SK-N-SH (cell line): ENCODE measurements at regions of chr19 and their contacts with region 1.

Region 1: GRCh38 chr19:4638828-4639530 is at the start of gene TNFAIP8L1:
- DNase-seq: peak; percentile 100
- H3K4me3 ChIP-seq: peak within 1 kb of the TSS; percentile 72 to 89
- H3K27ac ChIP-seq: peak within 1 kb of the TSS; percentile 54 to 62; a peak in 3 of 4 replicates
- H3K4me1 ChIP-seq: peaks cover 3 to 20% of the 10 kb centered on the region in 2 experiments; a peak in 1 of 4 replicates
- H3K27me3 ChIP-seq: no peaks in the 10 kb centered on the region
- CTCF ChIP-seq: no peak
- EP300 ChIP-seq: no peak
- RAD21 ChIP-seq: no peak
- polyA plus RNA-seq, gene TNFAIP8L1: 5.7 and 6.4 TPM in 2 replicates

Region 2: DNA sequence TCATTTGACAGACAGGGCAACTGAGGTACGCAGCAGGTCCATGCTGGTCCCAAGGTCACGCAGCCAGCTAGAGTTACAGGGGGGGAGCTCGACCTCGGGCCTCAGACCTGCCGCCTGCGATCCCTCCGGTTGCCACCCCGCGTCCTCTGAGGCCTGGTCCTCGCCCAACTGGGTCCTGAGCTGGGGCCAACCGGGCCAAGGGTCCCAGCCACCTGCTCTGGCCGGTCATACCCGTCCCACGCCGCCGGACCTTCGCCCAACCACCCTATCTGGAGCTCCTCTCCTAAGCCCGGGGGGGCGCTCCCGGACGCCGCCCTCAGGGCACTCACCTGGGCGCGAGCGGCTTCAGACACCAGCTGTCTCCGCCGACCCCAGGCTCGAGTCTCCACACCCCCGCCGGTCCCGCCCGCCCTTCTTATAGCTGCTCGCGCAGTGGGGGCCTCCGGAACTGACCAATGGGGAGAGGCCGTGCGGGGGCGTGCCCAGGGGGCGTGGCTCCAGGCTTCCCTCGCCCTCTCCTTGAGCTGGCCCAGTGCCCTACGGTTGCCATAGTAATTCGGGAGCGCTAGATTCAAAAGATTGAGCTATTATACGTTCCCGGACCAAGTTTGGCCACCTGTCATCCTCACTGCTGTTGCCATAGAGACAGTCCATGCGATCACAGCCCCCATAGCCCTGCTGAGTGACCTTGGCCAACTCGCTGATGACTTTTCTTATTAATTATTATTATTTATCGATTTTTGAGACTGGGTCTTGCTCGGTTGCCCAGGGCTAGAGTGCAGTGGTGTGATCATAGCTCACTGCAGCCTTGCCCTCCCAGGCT is 103.9 kb before region 1 on chr19 and contains the start of gene PLIN5:
- CTCF ChIA-PET with region 1: interaction called, 10 read pairs
- POLR2A ChIA-PET with region 1: no interaction called
- DNase-seq: peak; percentile 98
- H3K4me3 ChIP-seq: peak within 1 kb of the TSS; percentile 29 to 31; a peak in 3 of 4 replicates
- H3K27ac ChIP-seq: no peak within 1 kb of the TSS
- H3K4me1 ChIP-seq: peaks cover 0 to 13% of the 10 kb centered on the region in 2 experiments; a peak in 2 of 4 replicates
- H3K27me3 ChIP-seq: peaks cover 26% of the 10 kb centered on the region; the same call in 1 of the 2 replicates
- CTCF ChIP-seq: 0 out of 2 replicates have a peak, but pooled peaks have one; percentile 10
- EP300 ChIP-seq: no peak
- RAD21 ChIP-seq: no peak
- polyA plus RNA-seq, gene PLIN5: 0.59 and 0.68 TPM in 2 replicates

Region 3: GRCh38 chr19:4557971-4558941 is 80.7 kb before region 1 on chr19:
- CTCF ChIA-PET with region 1: interaction called, 25 read pairs
- POLR2A ChIA-PET with region 1: no interaction called
- DNase-seq: peak; percentile 83
- H3K4me3 ChIP-seq: peak overlapping the region in 1 of 2 experiments; percentile 43; a peak in 1 of 4 replicates
- H3K27ac ChIP-seq: no peak overlapping the region
- H3K4me1 ChIP-seq: peaks cover 0 to 8% of the 10 kb centered on the region in 2 experiments; a peak in 1 of 4 replicates
- H3K27me3 ChIP-seq: no peaks in the 10 kb centered on the region
- CTCF ChIP-seq: peak; percentile 88
- EP300 ChIP-seq: no peak
- RAD21 ChIP-seq: peak; percentile 57

Region 4: DNA sequence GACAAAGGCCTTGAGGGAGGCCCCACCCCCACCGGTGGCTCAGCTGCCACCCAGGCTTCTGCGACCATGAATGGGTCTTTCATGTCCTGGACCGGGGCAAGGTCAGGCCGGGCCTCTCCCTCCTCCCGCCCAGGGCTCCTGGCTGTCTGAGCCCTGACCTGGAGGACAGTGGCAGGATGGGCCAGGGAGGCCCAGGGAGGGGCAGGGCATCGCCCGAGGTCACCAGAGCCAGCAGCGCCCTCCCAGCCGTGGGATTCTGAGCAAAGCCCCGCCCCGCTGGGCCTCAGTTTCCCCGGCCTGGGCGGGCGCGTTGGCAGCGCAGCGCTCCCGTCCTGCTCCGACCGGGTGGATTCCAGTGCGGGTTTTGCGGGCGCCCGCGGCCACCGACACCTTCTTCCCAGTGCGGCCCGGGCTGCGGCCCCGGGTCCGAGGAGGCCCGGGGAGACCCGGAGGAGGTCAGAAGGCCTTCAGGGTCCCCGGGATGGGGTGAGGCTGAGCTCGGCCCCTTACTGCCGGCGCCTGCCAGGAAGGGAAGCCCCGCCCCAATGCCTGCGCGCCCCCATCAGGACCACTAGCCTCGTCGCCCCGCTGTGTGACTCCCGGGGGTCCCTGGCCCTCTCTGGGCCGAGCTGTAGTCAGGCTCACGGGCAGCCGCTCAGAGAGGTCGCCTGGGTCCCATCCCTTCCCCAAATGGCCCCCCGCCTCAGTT is 54.9 kb before region 1 on chr19:
- CTCF ChIA-PET with region 1: interaction called, 93 read pairs
- POLR2A ChIA-PET with region 1: no interaction called
- DNase-seq: peak; percentile 87
- H3K4me3 ChIP-seq: peak overlapping the region; percentile 50 to 60
- H3K27ac ChIP-seq: no peak overlapping the region
- H3K4me1 ChIP-seq: peaks cover 0 to 8% of the 10 kb centered on the region in 2 experiments; a peak in 1 of 4 replicates
- H3K27me3 ChIP-seq: peaks cover 22% of the 10 kb centered on the region; the same call in 1 of the 2 replicates
- CTCF ChIP-seq: no peak
- EP300 ChIP-seq: no peak
- RAD21 ChIP-seq: no peak

Region 5: DNA sequence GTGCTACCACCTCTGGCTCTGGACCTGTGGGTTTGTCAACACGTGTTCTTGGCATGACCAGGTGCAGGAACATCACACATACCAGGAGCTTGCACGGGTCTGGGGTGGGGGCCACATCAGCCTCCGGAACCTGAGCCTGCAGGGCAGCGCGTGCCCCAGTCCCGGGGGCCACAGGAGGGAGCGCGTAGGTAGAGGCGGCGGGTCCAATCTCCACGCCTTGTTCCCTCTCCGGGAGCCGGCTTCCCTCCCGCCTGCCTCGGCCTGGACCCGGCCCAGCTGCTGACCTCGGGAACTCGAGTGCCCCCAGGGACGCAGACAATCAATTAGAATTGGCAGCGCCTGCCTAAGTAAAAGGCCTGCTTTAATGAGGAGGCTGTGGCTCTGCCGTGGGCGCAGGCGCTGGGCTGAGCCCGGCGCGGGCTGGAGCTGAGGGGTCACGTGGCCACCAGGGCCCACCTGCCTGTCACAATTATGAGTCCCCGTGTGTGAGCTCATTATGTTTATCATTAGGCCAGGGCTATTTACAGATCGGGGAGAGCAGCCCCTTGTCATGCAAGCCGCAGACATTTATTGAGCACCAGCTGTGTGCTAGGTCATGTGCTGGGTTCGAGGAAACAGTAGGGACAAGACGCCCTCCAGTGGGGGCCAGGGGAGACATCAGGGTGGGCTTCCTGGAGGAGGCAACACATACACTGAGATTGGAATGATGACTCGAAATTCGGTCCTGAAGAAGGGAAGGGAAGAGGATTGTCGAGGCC is 31.9 kb before region 1 on chr19:
- CTCF ChIA-PET with region 1: interaction called, 19 read pairs
- POLR2A ChIA-PET with region 1: no interaction called
- DNase-seq: peak; percentile 89
- H3K4me3 ChIP-seq: no peak overlapping the region; a peak in 1 of 4 replicates
- H3K27ac ChIP-seq: no peak overlapping the region
- H3K4me1 ChIP-seq: peaks cover 0 to 2% of the 10 kb centered on the region in 2 experiments; a peak in 1 of 4 replicates
- H3K27me3 ChIP-seq: peaks cover 27% of the 10 kb centered on the region; the same call in 1 of the 2 replicates
- CTCF ChIP-seq: no peak
- EP300 ChIP-seq: peak in 1 of 2 experiments; percentile 48; a peak in 1 of 4 replicates
- RAD21 ChIP-seq: no peak

Region 6: DNA sequence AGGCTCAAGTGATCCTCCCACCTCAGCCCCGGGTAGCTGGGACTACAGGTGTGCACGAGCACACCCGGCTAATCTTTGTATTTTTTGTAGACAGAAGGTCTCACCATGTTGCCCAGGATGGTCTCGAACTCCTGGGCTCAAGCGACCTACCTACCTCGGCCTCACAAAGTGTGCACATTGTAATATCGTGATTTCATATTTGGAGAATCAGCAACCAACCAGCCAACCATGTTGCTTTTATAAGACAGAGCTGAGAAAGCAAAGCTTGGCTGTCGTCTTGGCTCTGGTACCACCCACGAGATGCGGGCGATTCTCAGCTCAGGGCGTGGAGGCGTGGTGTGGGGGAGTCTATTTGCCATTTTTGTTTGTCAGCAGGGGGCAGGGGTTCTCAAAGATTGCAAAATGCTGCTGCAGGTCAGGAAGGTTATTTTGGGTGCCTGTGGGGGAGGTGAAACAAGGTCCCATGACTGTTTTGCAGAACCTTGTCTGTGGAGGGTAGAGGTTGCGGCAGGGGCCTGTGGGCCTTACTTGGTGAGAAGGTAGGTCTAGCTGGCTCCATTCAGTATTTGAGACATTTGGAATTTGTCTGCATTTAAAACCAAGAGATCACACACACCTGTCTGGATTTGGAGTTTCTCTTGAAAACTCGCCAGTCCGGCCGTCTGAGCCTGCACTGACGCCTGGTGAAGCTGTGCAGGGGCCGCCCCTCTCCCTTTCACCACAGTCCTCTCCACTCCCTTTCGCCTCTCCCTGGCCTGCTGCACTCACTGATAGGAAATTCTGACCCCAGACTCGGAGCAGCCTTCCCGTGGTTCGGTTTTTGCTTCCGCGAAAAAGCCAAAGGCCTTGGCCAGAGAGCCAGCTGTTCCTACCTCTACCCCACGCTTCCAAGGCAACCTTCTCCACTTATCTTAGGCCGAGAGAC is 15.7 kb after region 1 on chr19:
- CTCF ChIA-PET with region 1: interaction called, 19 read pairs
- POLR2A ChIA-PET with region 1: no interaction called
- DNase-seq: no peak
- H3K4me3 ChIP-seq: no peak overlapping the region
- H3K27ac ChIP-seq: no peak overlapping the region
- H3K4me1 ChIP-seq: no peaks in the 10 kb centered on the region
- H3K27me3 ChIP-seq: no peaks in the 10 kb centered on the region
- CTCF ChIP-seq: no peak
- EP300 ChIP-seq: no peak
- RAD21 ChIP-seq: no peak